HCT116 (cell line): ENCODE measurements at regions of chr11 and their contacts with region 1.

Region 1: DNA sequence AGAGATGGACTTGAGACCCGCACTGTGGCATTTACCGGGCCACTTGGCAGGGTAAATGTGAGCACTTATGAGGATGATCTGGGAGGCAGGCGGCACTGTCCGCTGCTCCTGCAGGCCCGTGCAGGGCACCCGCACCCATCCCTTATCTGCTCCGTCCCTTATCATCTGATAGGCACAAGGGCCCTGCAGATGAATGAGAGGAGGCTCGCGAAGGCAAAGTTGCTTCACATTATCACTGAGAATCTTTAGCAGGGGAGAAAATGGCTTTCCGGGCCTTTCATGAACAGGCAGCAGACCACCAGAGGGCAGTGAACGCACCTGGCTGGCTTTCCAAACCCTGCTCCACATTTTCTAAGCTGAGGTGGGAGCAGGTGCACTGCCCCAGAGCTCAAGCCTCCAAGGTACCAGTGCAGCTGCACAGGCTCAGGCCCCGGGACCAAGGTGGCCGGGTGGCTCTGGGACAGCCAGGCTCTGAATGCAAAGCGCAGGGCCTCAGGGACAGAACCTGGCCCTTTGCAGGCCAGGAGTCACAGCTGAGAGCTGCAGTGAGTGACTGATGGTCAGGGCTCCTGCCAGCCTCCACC is 165.6 kb downstream of the SHANK2 start:
- DNase-seq: no peak
- ATAC-seq: peak; percentile 82
- H3K4me3 ChIP-seq: no peak overlapping the region
- H3K27ac ChIP-seq: no peak overlapping the region
- H3K4me1 ChIP-seq: no peaks in the 10 kb centered on the region
- H3K27me3 ChIP-seq: no peaks in the 10 kb centered on the region
- CTCF ChIP-seq: peak; percentile 52 to 72 (median 60); a peak in 5 of 6 replicates
- POLR2A ChIP-seq: no peak
- RAD21 ChIP-seq: peak; percentile 67

Region 2: GRCh38 chr11:71070491-71071453 is 16.0 kb before region 1 on chr11:
- CTCF ChIA-PET with region 1: no interaction called
- POLR2A ChIA-PET with region 1: no interaction called
- RAD21 ChIA-PET with region 1: no interaction called
- intact Hi-C with region 1: no loop called
- DNase-seq: no peak
- ATAC-seq: no peak
- H3K4me3 ChIP-seq: no peak overlapping the region
- H3K27ac ChIP-seq: no peak overlapping the region
- H3K4me1 ChIP-seq: peaks cover 0 to 3% of the 10 kb centered on the region in 2 experiments; a peak in 1 of 4 replicates
- H3K27me3 ChIP-seq: no peaks in the 10 kb centered on the region
- CTCF ChIP-seq: no peak
- POLR2A ChIP-seq: no peak
- RAD21 ChIP-seq: no peak

Region 3: GRCh38 chr11:71329165-71329510 is 242.4 kb after region 1 on chr11:
- CTCF ChIA-PET with region 1: interaction called, 12 read pairs
- POLR2A ChIA-PET with region 1: no interaction called
- RAD21 ChIA-PET with region 1: no interaction called
- intact Hi-C with region 1: no loop called
- DNase-seq: no peak
- ATAC-seq: peak; percentile 78
- H3K4me3 ChIP-seq: no peak overlapping the region
- H3K27ac ChIP-seq: no peak overlapping the region
- H3K4me1 ChIP-seq: no peaks in the 10 kb centered on the region
- H3K27me3 ChIP-seq: no peaks in the 10 kb centered on the region
- CTCF ChIP-seq: peak in 1 of 3 experiments; percentile 40; a peak in 2 of 6 replicates
- POLR2A ChIP-seq: no peak
- RAD21 ChIP-seq: no peak

Region 4: DNA sequence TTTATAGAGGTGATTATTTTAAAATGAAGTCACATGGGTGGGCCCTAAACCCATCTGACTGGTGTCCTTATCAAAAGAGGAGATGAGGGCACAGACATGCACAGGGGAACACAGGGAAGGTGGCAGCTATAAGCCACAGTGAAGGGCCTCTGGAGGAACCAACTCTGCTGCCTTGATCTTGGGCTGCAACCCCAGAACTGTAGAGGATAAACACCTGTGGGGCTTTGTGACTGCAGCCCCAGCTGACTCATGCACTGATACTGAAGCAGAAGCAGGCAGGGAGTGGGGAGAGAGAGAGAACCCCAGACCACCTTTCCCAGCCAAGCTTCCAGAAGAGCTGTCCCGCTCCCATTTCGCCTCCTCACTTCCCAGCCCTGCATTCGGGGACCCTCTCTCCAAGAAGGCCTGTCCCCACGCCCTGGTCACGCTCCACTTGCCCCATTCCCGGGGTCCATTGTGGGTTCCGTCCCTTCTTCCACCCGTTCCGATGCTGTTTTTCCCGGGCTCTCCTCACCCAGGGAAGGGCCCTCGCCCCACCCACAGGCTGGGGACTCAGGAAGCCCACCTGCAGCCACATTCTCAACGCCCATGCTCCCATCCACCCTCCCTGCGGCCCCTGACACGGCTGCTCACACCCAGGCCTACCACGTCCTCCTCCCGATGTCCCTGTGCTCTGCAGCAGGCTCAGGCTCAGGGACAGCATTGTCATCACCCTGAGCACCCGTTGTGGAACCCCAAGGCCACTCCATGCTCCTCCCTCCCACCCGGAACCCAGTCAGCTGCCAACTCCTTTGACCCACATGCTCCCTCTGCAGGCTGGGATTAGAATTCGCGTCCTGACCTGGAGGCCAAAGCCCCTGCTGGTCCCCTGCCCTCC is 256.4 kb after region 1 on chr11:
- CTCF ChIA-PET with region 1: no interaction called
- POLR2A ChIA-PET with region 1: no interaction called
- RAD21 ChIA-PET with region 1: no interaction called
- intact Hi-C with region 1: loop called (anchors 1 kb)
- DNase-seq: peak; percentile 40
- ATAC-seq: peak; percentile 95
- H3K4me3 ChIP-seq: no peak overlapping the region
- H3K27ac ChIP-seq: no peak overlapping the region
- H3K4me1 ChIP-seq: no peaks in the 10 kb centered on the region
- H3K27me3 ChIP-seq: peaks cover 14% of the 10 kb centered on the region
- CTCF ChIP-seq: peak; percentile 65 to 79 (median 79)
- POLR2A ChIP-seq: no peak
- RAD21 ChIP-seq: peak; percentile 79

Region 5: DNA sequence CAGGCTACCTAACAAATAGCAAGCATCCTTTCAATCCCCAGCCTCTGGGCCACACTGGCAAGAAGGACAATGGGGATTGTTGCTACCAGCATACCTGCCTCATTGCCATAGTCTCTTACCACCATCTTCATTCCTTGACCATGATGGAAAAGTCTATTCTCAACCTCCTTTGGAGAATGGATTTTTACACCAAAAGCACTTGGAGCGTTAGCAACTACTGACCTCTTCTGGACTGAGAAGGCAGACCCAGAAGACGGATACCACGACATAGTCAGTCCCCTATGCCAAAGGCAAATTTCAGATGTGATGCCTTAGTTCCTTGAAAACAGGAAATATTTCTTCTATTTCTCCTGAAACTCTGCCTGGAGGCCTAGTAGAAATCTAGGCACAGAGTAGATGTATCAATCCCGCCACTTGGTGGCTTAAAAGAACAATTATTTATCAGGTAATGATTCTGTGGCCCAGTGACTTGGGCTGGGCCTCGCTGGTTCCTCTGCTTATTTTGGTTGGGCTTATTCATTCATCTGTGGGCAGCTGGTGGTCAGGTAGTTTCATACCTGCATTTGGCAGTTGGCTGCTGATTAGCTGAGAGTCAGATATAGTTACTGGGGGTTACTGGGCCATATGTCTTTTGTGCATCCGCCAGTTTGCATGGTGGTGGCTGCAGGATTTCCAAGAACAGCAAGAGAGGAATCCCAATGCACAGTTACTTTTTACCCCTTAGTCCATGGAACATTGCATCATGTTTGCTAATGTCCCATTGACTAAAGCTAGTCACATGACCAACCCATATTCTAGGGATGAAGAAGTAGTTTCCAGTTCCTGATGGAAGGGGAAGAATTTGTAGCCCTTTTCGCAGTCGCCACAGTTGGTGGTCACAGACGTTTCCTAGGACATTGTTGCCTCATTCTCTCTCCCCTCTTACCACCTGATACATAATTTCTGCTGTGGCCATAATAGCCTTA is 286.2 kb after region 1 on chr11:
- CTCF ChIA-PET with region 1: interaction called, 3 read pairs
- POLR2A ChIA-PET with region 1: no interaction called
- RAD21 ChIA-PET with region 1: no interaction called
- intact Hi-C with region 1: loop called (anchors 1 kb)
- DNase-seq: peak; percentile 2
- ATAC-seq: peak; percentile 42
- H3K4me3 ChIP-seq: no peak overlapping the region
- H3K27ac ChIP-seq: no peak overlapping the region
- H3K4me1 ChIP-seq: no peaks in the 10 kb centered on the region
- H3K27me3 ChIP-seq: peaks cover 26% of the 10 kb centered on the region
- CTCF ChIP-seq: peak; percentile 23 to 33 (median 33); a peak in 4 of 6 replicates
- POLR2A ChIP-seq: no peak
- RAD21 ChIP-seq: peak; percentile 66

Region 6: GRCh38 chr11:71420455-71421241 is 333.9 kb after region 1 on chr11:
- CTCF ChIA-PET with region 1: interaction called, 12 read pairs
- POLR2A ChIA-PET with region 1: no interaction called
- RAD21 ChIA-PET with region 1: no interaction called
- intact Hi-C with region 1: loop called (anchors 1 kb)
- DNase-seq: peak; percentile 56
- ATAC-seq: peak; percentile 82
- H3K4me3 ChIP-seq: no peak overlapping the region
- H3K27ac ChIP-seq: no peak overlapping the region
- H3K4me1 ChIP-seq: peaks cover 0 to 5% of the 10 kb centered on the region in 2 experiments; a peak in 1 of 4 replicates
- H3K27me3 ChIP-seq: peaks cover 2% of the 10 kb centered on the region; the same call in 1 of the 2 replicates
- CTCF ChIP-seq: peak; percentile 84 to 92 (median 87)
- POLR2A ChIP-seq: no peak
- RAD21 ChIP-seq: peak; percentile 88